ENCODE measurements at regions of chr10 and their contacts with region 1.

Region 1: DNA sequence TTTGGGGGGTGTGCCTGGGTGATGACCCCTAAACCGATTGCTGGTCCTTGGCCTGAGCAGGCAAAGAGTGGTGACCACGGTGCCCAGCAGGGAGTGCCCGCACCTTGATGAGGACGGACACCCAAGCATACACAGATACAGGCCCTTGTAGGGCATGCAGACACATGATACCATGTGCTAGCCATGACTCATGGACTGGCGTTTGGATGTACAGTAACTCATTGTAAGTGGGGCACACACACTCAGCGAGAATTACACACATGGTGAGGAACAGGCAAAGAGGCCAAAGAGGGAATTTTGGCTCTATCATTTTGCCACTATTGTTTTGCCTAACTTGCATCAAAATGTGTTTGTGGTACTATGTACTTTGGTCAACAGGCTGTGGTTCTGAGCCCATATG is 24.1 kb downstream of the KAZALD1 start:
- DNase-seq: no peak
- ATAC-seq: no peak
- H3K4me3 ChIP-seq: no peak overlapping the region
- H3K27ac ChIP-seq: no peak overlapping the region
- H3K4me1 ChIP-seq: no peaks in the 10 kb centered on the region
- H3K27me3 ChIP-seq: peaks cover 16% of the 10 kb centered on the region
- CTCF ChIP-seq: no peak

Region 2: GRCh38 chr10:101103430-101103829 is 17.6 kb after region 1 on chr10:
- CTCF ChIA-PET with region 1: no interaction called
- POLR2A ChIA-PET with region 1: no interaction called
- in situ Hi-C with region 1: no loop called
- intact Hi-C with region 1: no loop called
- DNase-seq: no peak
- ATAC-seq: no peak
- H3K4me3 ChIP-seq: no peak overlapping the region
- H3K27ac ChIP-seq: no peak overlapping the region
- H3K4me1 ChIP-seq: no peaks in the 10 kb centered on the region
- H3K27me3 ChIP-seq: no peaks in the 10 kb centered on the region
- CTCF ChIP-seq: no peak

Region 3: DNA sequence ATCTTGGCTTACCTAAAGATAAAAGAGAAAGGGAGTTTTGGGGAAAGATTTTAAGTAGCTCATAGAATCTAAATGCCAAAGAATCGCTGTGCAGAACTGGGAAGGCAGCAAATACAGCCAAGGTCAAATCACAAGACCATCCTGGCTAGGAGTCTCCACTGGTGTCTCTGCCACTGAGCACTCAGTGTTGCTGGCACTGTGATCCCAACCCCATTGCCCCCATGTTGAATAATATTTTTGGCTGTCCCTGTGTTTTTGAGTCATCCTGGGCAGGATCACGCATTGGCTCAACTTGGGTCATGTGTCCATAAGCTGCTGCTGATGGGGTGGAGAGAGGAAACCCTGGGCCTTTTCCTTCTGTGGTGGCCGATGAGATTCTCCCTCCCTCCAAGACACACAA is 66.5 kb after region 1 on chr10:
- CTCF ChIA-PET with region 1: no interaction called
- POLR2A ChIA-PET with region 1: no interaction called
- in situ Hi-C with region 1: no loop called
- intact Hi-C with region 1: no loop called
- DNase-seq: no peak
- ATAC-seq: no peak
- H3K4me3 ChIP-seq: no peak overlapping the region
- H3K27ac ChIP-seq: no peak overlapping the region
- H3K4me1 ChIP-seq: no peaks in the 10 kb centered on the region
- H3K27me3 ChIP-seq: peaks cover 23% of the 10 kb centered on the region
- CTCF ChIP-seq: no peak

Region 4: DNA sequence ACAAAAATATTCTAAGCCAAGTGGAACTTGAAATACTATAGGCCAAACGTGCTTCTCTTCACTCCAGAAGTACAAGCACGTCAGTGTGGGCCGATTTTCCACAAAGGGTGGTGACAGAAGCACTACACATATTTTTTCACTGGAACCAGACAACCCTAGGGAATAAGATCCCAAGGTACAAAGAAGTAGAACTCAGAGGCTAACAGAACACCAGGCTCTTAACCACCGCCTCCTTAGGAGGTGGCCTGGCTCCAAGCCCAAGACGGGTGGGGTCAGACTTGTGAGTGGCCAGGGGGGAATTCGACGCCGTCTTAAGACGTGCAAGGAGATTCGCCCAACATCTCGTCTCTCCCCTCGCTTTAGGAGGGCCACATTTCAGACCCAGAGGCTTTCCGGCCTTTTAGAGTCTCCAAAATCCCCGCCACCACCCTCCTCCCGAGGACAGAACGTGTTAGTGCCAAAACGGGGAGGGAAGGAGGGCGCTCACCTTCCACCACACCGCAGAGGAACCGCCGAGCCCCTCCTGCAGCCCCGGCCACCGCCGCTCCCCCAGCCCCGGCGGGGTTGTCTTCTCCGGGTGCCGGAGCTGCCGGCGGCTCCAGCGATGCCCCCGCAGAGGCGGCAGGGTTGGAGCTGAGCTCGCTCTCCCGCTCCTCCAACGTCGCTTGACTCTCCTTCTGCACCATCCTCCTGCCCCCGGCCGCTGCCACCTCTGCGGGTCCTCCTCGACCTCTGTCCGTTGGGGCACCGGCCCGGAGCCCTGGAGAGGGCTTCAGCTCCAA is 731.7 kb after region 1 on chr10:
- CTCF ChIA-PET with region 1: no interaction called
- POLR2A ChIA-PET with region 1: interaction called, 11 read pairs
- in situ Hi-C with region 1: no loop called
- intact Hi-C with region 1: no loop called
- DNase-seq: no peak
- ATAC-seq: peak; percentile 64
- H3K4me3 ChIP-seq: peak overlapping the region; percentile 84 to 98
- H3K27ac ChIP-seq: peak overlapping the region; percentile 88
- H3K4me1 ChIP-seq: peaks cover 15% of the 10 kb centered on the region
- H3K27me3 ChIP-seq: no peaks in the 10 kb centered on the region
- CTCF ChIP-seq: no peak